Breast epithelium (tissue), 4 donors: ENCODE measurements at regions of chr9 and their contacts with region 1.

Region 1: GRCh38 chr9:116635908-116636307 is 51.2 kb upstream of the TRIM32 start:
- DNase-seq: no peak
- H3K4me3 ChIP-seq: no peak overlapping the region
- H3K27ac ChIP-seq: no peak overlapping the region
- H3K4me1 ChIP-seq: no peaks in the 10 kb centered on the region
- H3K27me3 ChIP-seq: no peaks in the 10 kb centered on the region
- CTCF ChIP-seq: no peak
- POLR2A ChIP-seq: no peak

Region 2: DNA sequence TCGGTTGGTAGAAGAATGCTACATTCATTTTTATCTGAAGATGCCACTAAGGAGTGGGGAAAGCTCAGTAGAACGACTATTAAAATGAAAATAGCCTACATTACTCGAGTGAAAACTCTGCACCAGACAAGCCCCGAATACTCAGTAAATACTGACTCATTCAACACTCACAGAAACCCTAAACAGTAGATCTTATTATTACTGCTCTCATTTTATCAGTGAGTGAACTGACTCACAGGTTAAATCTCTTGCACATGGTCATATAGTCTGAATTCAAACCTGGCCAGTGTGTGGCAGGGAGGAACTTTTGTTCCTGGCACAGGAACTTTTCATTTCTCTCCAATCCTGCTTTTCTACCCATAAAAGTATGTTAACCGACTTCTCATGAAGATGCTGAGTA is 491.9 kb before region 1 on chr9:
- intact Hi-C with region 1: no loop called
- DNase-seq: no peak
- H3K4me3 ChIP-seq: no peak overlapping the region
- H3K27ac ChIP-seq: no peak overlapping the region
- H3K4me1 ChIP-seq: no peaks in the 10 kb centered on the region
- H3K27me3 ChIP-seq: no peaks in the 10 kb centered on the region
- CTCF ChIP-seq: no peak
- POLR2A ChIP-seq: no peak

Region 3: DNA sequence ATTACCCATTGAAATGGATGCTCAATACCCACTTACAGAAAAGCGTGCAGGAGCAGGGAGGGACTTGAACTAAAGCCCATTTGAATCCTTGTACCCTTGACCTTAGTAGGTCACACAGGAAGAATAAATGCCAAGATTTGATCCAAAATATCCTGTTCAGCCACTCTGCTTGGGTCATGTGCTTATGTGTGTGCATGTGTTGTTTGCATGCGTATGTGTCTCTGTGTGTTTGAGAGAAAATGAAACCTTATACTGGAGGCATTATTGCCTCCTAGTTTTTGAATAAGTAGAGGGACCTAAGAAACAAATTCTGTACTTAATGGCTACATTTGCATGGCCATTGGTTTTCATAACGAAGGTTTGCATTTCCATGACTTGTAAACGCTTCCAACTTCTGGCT is 12.2 kb before region 1 on chr9:
- intact Hi-C with region 1: loop called (anchors 2 kb)
- DNase-seq: no peak
- H3K4me3 ChIP-seq: no peak overlapping the region
- H3K27ac ChIP-seq: no peak overlapping the region
- H3K4me1 ChIP-seq: no peaks in the 10 kb centered on the region
- H3K27me3 ChIP-seq: no peaks in the 10 kb centered on the region
- CTCF ChIP-seq: no peak
- POLR2A ChIP-seq: no peak